Activated T-helper 1 cell treated with anti-CD3 and anti-CD28 coated beads, Interleukin-12 subunit alpha, Interleukin-12 subunit beta, Interleukin-2, Interleukin-4 antibody, amounts not matched to agents 30 ng/mL and 10 ng/mL and 1 ng/mL, durations not matched to agents 14 hours and 24 hours and 36 hours (primary cell): ENCODE measurements at regions of chr13 and their contacts with region 1.

Region 1: GRCh38 chr13:92320323-92320722 is 906.3 kb upstream of the GPC6 start:
- DNase-seq: no peak
- H3K4me3 Mint-ChIP-seq: no peak overlapping the region
- H3K27ac Mint-ChIP-seq: no peak overlapping the region
- H3K4me1 Mint-ChIP-seq: no peaks in the 10 kb centered on the region
- H3K27me3 Mint-ChIP-seq: no peaks in the 10 kb centered on the region

Region 2: DNA sequence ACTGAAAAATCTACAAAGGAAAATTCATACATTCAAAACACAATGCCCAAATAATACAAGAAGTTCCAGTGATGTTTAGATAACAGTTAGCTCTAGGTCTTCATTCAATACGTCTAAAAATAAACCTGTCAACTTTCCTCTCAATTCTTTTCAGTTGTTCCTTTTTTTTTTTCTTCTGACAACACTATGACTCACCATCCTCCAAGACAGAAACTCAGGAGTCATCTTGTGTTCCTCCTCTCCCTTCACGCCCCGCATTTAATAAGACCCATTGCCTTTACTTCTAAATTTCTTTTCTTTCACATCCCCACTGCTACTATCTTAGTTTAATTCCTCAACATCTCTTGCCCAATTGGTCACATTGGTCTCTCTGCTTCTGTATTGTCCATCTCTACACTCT is 162.0 kb before region 1 on chr13:
- intact Hi-C with region 1: no loop called
- DNase-seq: no peak
- H3K4me3 Mint-ChIP-seq: no peak overlapping the region
- H3K27ac Mint-ChIP-seq: no peak overlapping the region
- H3K4me1 Mint-ChIP-seq: no peaks in the 10 kb centered on the region
- H3K27me3 Mint-ChIP-seq: no peaks in the 10 kb centered on the region

Region 3: GRCh38 chr13:92303428-92303827 is 16.9 kb before region 1 on chr13:
- intact Hi-C with region 1: no loop called
- DNase-seq: no peak
- H3K4me3 Mint-ChIP-seq: no peak overlapping the region
- H3K27ac Mint-ChIP-seq: no peak overlapping the region
- H3K4me1 Mint-ChIP-seq: no peaks in the 10 kb centered on the region
- H3K27me3 Mint-ChIP-seq: no peaks in the 10 kb centered on the region

Region 4: GRCh38 chr13:93116809-93117208 is 796.5 kb after region 1 on chr13:
- intact Hi-C with region 1: loop called (anchors 5 kb)
- DNase-seq: no peak
- H3K4me3 Mint-ChIP-seq: no peak overlapping the region
- H3K27ac Mint-ChIP-seq: no peak overlapping the region
- H3K4me1 Mint-ChIP-seq: no peaks in the 10 kb centered on the region
- H3K27me3 Mint-ChIP-seq: no peaks in the 10 kb centered on the region